CD8-positive, alpha-beta T cell (primary cell): ENCODE measurements at regions of chr11 and their contacts with region 1.

Region 1: GRCh38 chr11:101914738-101915426 is at the start of gene CEP126:
- DNase-seq: peak; percentile 89 to 96 (median 94)
- ATAC-seq: peak; percentile 89
- H3K4me3 ChIP-seq: peak within 1 kb of the TSS; percentile 79 to 91
- H3K4me3 Mint-ChIP-seq: peak within 1 kb of the TSS; percentile 93
- H3K27ac ChIP-seq: peak within 1 kb of the TSS; percentile 68 to 86
- H3K27ac Mint-ChIP-seq: peak within 1 kb of the TSS; percentile 89
- H3K4me1 ChIP-seq: peaks cover 10% of the 10 kb centered on the region
- H3K4me1 Mint-ChIP-seq: peaks cover 23% of the 10 kb centered on the region
- H3K27me3 ChIP-seq: no peaks in the 10 kb centered on the region
- H3K27me3 Mint-ChIP-seq: peaks cover 6% of the 10 kb centered on the region
- CTCF ChIP-seq: peak; percentile 16
- total RNA-seq, gene CEP126: 0.81 to 0.87 TPM

Region 2: DNA sequence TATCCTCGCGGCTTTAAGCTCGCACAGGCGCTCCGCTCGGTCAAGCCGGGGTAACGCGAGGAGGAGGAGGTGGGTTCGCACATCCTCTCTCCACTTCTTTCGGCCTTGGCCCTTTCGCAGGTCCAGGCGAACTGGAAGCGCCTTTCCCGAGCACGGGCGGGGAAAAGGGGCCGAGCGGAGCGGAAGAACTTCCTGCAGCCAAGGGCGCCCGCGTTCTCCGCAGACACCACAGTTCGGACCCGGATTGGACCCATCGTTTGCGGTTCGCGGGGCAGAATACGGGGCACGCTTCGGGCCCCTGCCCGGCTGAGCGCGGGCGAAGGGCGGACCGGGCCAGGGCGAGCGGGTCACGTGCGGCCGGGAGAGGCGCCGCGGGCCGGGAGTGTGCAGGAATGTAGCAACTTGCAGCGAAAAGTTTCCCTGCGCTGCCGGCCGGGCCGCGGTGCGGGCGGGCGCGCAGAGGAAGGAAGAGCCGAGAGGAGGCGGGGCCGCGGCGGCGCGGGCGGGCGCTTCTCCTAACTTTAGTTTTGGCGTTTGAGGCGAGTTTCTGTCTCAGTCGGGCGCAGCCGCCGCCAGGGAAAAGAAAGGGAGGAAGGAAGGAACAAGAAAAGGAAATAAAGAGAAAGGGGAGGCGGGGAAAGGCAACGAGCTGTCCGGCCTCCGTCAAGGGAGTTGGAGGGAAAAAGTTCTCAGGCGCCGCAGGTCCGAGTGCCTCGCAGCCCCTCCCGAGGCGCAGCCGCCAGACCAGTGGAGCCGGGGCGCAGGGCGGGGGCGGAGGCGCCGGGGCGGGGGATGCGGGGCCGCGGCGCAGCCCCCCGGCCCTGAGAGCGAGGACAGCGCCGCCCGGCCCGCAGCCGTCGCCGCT is 195.2 kb after region 1 on chr11 and contains the start of gene YAP1:
- CTCF ChIA-PET with region 1: no interaction called
- POLR2A ChIA-PET with region 1: no interaction called
- intact Hi-C with region 1: loop called in 1 of 2 experiments (anchors 5 kb)
- DNase-seq: peak; percentile 21 to 76 (median 58)
- ATAC-seq: peak; percentile 73
- H3K4me3 ChIP-seq: peak within 1 kb of the TSS; percentile 57 to 72
- H3K4me3 Mint-ChIP-seq: peak within 1 kb of the TSS; percentile 93
- H3K27ac ChIP-seq: no peak within 1 kb of the TSS
- H3K27ac Mint-ChIP-seq: peak within 1 kb of the TSS; percentile 41
- H3K4me1 ChIP-seq: peaks cover 14% of the 10 kb centered on the region
- H3K4me1 Mint-ChIP-seq: peaks cover 14% of the 10 kb centered on the region
- H3K27me3 ChIP-seq: peaks cover 2 to 3% of the 10 kb centered on the region in 2 experiments
- H3K27me3 Mint-ChIP-seq: peaks cover 49% of the 10 kb centered on the region
- CTCF ChIP-seq: no peak
- total RNA-seq, gene YAP1: not detected

Region 3: DNA sequence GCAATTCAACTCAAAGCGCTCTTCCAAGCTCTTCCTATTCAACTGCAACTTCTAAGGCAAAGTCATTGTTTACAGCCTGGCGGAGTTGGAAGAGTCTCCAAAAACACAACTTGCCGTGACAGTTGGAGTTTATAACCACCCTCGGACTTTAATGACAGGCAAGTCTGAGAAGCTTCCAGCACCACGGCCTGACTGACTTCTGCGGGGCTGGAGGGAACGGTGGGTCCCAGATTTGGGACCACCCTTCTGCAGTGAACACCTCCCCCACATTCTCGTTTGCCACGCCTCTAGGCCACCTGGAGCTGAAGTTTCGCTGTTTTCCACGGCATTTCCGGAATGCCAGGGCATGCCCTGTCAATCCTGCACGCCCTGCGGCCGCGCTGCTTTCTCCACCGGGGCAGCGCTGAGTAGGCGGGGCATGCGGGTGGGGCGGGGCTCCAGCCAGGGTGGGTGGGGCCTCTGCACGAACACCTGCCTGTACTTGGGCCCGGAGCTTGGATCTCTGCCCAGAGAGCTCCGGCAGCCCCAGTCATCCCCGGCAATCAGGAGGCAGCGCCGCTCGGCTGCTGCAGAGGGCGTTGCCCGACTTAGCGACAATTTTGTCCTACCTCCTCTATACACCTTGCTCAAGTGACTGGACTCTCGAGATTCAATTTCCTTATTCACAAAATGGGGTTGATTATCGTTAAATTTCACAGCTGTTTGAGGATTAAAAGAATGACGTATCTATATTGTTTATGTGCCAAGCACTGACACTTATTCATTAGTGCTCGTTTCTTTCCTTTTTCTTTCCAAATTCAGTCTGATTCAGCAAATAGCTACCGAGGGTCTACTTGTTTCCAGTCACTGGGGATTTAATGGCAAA is 353.7 kb after region 1 on chr11:
- CTCF ChIA-PET with region 1: no interaction called
- POLR2A ChIA-PET with region 1: no interaction called
- intact Hi-C with region 1: loop called (anchors 2 to 5 kb)
- DNase-seq: peak; percentile 67 to 92 (median 80)
- ATAC-seq: peak; percentile 98
- H3K4me3 ChIP-seq: peak overlapping the region; percentile 33 to 59
- H3K4me3 Mint-ChIP-seq: peak overlapping the region; percentile 72
- H3K27ac ChIP-seq: no peak overlapping the region
- H3K27ac Mint-ChIP-seq: peak overlapping the region; percentile 33
- H3K4me1 ChIP-seq: peaks cover 17% of the 10 kb centered on the region
- H3K4me1 Mint-ChIP-seq: peaks cover 28% of the 10 kb centered on the region
- H3K27me3 ChIP-seq: no peaks in the 10 kb centered on the region
- H3K27me3 Mint-ChIP-seq: peaks cover 5% of the 10 kb centered on the region
- CTCF ChIP-seq: peak; percentile 45

Region 4: DNA sequence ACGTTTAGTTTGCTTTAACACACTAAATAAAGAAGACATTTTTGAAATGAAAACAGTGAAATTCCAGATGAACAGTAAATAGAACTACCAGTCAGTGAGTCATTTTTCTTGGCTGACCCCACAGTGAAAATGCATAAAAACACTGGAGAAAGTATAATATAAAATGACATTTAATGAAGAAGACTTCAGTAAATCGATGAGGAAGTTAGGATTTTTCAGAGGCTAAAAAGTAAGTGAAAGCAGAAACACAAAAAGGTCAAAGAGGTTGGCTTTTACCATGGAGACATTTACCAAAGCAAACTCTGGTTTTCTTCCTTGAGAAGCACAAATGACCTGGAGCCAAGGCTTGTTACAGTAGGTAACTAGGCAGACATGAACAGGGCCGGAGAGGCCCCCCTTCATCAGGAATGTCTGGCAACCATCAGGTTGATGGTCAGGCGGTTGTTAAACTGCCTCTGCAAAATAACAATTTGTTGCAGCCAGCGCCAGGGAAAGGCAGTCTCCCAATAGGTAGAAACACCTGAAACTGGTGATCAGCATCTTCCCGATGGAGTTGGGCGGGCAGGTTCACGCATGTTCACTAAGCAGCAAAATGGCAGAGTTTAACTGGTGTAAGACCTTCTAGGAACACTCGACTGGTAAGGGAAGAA is 554.4 kb after region 1 on chr11:
- CTCF ChIA-PET with region 1: no interaction called
- POLR2A ChIA-PET with region 1: no interaction called
- intact Hi-C with region 1: no loop called
- DNase-seq: no peak
- ATAC-seq: no peak
- H3K4me3 ChIP-seq: no peak overlapping the region
- H3K4me3 Mint-ChIP-seq: no peak overlapping the region
- H3K27ac ChIP-seq: no peak overlapping the region
- H3K27ac Mint-ChIP-seq: no peak overlapping the region
- H3K4me1 ChIP-seq: peaks cover 77% of the 10 kb centered on the region
- H3K4me1 Mint-ChIP-seq: peaks cover 95% of the 10 kb centered on the region
- H3K27me3 ChIP-seq: no peaks in the 10 kb centered on the region
- H3K27me3 Mint-ChIP-seq: no peaks in the 10 kb centered on the region
- CTCF ChIP-seq: no peak

Region 5: GRCh38 chr11:103091801-103092524 is 1177.1 kb after region 1 on chr11 and contains the start of gene DCUN1D5:
- CTCF ChIA-PET with region 1: no interaction called
- POLR2A ChIA-PET with region 1: no interaction called
- intact Hi-C with region 1: loop called (anchors 2 to 10 kb)
- DNase-seq: peak; percentile 88 to 97 (median 95)
- ATAC-seq: peak; percentile 94
- H3K4me3 ChIP-seq: peak within 1 kb of the TSS; percentile 84 to 91
- H3K4me3 Mint-ChIP-seq: peak within 1 kb of the TSS; percentile 84
- H3K27ac ChIP-seq: peak within 1 kb of the TSS; percentile 81 to 86
- H3K27ac Mint-ChIP-seq: peak within 1 kb of the TSS; percentile 95
- H3K4me1 ChIP-seq: peaks cover 25% of the 10 kb centered on the region
- H3K4me1 Mint-ChIP-seq: peaks cover 30% of the 10 kb centered on the region
- H3K27me3 ChIP-seq: peaks cover 0 to 2% of the 10 kb centered on the region in 2 experiments
- H3K27me3 Mint-ChIP-seq: peaks cover 20% of the 10 kb centered on the region
- CTCF ChIP-seq: no peak
- total RNA-seq, gene DCUN1D5: 17.8 to 19.5 TPM